Astrocyte of the cerebellum (primary cell): ENCODE measurements at regions of chr1 and their contacts with region 1.

Region 1: DNA sequence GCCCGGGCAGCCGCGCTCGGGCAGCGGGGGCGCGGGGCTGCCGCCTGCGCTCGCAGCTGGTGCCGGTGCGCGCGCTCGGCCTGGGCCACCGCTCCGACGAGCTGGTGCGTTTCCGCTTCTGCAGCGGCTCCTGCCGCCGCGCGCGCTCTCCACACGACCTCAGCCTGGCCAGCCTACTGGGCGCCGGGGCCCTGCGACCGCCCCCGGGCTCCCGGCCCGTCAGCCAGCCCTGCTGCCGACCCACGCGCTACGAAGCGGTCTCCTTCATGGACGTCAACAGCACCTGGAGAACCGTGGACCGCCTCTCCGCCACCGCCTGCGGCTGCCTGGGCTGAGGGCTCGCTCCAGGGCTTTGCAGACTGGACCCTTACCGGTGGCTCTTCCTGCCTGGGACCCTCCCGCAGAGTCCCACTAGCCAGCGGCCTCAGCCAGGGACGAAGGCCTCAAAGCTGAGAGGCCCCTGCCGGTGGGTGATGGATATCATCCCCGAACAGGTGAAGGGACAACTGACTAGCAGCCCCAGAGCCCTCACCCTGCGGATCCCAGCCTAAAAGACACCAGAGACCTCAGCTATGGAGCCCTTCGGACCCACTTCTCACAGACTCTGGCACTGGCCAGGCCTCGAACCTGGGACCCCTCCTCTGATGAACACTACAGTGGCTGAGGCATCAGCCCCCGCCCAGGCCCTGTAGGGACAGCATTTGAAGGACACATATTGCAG is 3.0 kb downstream of the ARTN start:
- DNase-seq: no peak
- H3K4me3 ChIP-seq: peak overlapping the region; percentile 31
- CTCF ChIP-seq: peak; percentile 38

Region 2: GRCh38 chr1:43836267-43836951 is 100.2 kb before region 1 on chr1:
- in situ Hi-C with region 1: loop called (anchors 5 kb)
- DNase-seq: no peak
- H3K4me3 ChIP-seq: no peak overlapping the region
- CTCF ChIP-seq: no peak

Region 3: DNA sequence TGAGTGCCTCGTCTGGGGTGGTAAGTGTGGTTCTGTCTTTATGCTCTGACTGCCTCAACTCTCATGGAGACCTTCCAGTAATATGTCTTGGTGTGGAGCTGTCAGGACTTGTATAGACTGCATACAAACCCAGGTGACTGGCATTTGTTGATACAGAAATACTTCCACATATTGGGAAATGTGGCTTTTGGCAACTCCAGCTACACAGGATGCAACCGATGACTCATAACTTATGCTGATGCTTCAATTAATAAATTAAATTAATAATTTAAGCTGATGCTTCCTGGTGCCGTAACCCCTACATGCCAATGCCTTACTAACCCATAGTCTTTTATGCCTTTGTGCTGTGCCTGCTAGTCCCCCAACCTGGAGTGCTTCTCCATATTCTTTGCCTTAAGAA is 75.3 kb before region 1 on chr1:
- in situ Hi-C with region 1: loop called (anchors 5 kb)
- DNase-seq: no peak
- H3K4me3 ChIP-seq: no peak overlapping the region
- CTCF ChIP-seq: no peak

Region 4: GRCh38 chr1:43879414-43879813 is 57.2 kb before region 1 on chr1:
- in situ Hi-C with region 1: no loop called
- DNase-seq: peak; percentile 53
- H3K4me3 ChIP-seq: no peak overlapping the region
- CTCF ChIP-seq: no peak

Region 5: GRCh38 chr1:43908863-43909262 is 27.7 kb before region 1 on chr1:
- in situ Hi-C with region 1: no loop called
- DNase-seq: no peak
- H3K4me3 ChIP-seq: no peak overlapping the region
- CTCF ChIP-seq: no peak

Region 6: GRCh38 chr1:43969746-43970466 is 33.3 kb after region 1 on chr1 and contains the start of gene DPH2:
- in situ Hi-C with region 1: no loop called
- DNase-seq: peak; percentile 93
- H3K4me3 ChIP-seq: peak within 1 kb of the TSS; percentile 96
- CTCF ChIP-seq: peak; percentile 14